AG04449 (cell line): ENCODE measurements at regions of chr9 and their contacts with region 1.

Region 1: DNA sequence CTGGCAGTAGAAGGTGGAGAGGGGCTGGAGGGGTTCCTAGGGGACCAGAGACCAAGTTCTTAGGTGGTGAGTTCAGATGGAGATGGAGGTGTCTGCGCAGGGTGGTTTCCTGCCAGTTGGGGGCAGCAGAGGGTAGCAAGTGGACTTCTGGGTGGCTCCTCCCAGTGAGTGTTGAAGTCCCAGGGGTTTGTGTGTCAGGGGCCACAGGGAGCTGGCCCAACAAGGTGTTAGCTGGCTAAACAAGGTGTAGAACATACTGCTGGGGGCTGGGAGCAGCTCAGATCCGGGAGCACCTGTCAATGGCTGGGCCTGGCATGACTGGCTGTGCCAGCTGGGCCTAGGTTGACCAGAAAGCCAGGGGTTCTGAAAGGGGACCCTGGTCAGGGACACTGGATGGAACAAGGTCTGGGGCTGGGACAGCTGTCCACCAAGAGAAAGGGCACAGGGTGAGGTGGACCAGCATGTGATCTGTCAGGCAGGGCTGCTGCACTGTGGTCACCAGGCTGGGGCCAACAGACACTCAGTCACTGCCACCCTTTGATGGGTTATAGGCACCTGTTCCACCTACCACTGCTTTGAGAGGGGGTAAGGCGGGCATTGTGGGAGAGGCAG is 35.6 kb downstream of the DAB2IP start:
- DNase-seq: no peak
- H3K4me3 ChIP-seq: no peak overlapping the region
- CTCF ChIP-seq: peak; percentile 91

Region 2: GRCh38 chr9:121331992-121332685 is 354.9 kb before region 1 on chr9:
- CTCF ChIA-PET with region 1: no interaction called
- POLR2A ChIA-PET with region 1: no interaction called
- DNase-seq: no peak
- H3K4me3 ChIP-seq: no peak overlapping the region
- CTCF ChIP-seq: peak; percentile 23

Region 3: GRCh38 chr9:121529237-121529987 is 157.6 kb before region 1 on chr9:
- CTCF ChIA-PET with region 1: no interaction called
- POLR2A ChIA-PET with region 1: no interaction called
- DNase-seq: peak; percentile 70
- H3K4me3 ChIP-seq: no peak overlapping the region
- CTCF ChIP-seq: no peak

Region 4: GRCh38 chr9:121557581-121558447 is 129.2 kb before region 1 on chr9:
- CTCF ChIA-PET with region 1: interaction called, 18 read pairs
- POLR2A ChIA-PET with region 1: interaction called, 3 read pairs
- DNase-seq: peak; percentile 76
- H3K4me3 ChIP-seq: peak overlapping the region; percentile 18
- CTCF ChIP-seq: no peak

Region 5: DNA sequence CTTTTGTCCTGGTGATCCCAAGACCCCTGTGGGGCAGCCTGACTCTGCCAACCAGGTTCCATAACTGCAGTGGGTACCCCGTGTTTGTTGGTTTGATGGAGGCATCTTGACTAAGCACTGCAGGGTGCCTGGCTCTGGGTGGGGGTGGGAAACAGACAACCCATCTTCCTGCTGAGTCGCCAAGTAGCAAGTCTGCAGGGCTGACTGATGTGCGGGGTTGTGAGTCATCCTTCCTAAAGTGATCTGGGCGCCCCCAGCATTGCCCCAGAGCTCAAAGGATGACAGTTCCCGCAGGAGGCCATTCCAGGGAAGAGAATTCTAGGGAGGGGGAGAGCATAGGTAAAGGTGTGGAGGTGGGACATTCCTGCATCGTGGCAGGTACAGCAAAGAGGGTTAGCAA is 12.1 kb before region 1 on chr9:
- CTCF ChIA-PET with region 1: interaction called, 110 read pairs
- POLR2A ChIA-PET with region 1: interaction called, 4 read pairs
- DNase-seq: no peak
- H3K4me3 ChIP-seq: no peak overlapping the region
- CTCF ChIP-seq: no peak

Region 6: DNA sequence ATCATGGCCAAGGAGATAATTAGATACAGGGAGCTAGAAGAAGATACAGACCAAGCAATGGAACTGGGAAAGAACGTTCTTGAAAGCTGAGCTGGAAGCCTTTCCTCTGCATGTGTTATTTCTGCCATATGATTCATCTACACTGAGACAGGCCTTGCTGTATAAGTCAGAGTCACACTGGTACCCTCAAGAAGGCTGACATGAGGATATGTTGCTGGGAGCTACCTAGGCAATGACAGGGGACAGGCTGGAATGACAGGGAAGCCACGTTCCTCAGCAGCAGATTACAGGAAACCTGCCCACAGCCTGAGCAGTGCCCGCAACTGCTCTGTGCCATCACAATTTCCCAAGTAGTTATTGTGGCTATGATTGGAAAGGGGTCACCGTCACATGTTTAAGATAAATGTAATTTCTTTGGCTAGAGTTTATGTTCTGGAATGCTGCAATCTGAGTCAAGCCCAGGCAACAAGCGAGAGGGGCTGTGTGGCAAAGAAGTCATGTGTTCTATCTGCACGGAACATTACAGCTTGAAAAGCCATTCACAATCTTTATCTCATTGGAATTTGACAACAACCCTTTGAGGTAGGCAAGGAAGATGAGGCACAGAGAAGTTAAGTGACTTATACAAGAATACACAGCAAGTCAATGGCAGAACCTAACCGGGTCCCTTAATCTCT is 297.8 kb after region 1 on chr9:
- CTCF ChIA-PET with region 1: interaction called, 42 read pairs
- POLR2A ChIA-PET with region 1: no interaction called
- DNase-seq: peak; percentile 77
- H3K4me3 ChIP-seq: no peak overlapping the region
- CTCF ChIP-seq: no peak

Region 7: DNA sequence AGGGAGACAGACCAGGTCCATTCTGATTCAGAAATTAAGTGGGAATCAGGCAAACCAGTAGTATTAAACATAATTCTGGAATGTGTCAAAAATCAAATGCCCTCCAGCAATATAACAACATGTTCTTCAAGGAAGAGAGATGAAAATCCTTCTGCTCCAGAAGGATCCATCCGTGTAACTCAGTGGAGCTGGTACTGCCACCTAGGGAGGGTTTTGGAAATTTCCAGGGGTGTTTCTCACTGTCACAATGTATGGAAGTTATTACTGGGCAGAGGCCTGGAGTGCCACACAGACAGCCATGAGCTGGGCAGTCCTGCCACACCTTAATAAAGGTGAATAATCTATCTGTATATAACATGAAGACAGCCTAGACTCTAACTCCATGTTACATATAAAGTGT is 318.6 kb after region 1 on chr9:
- CTCF ChIA-PET with region 1: interaction called, 146 read pairs
- POLR2A ChIA-PET with region 1: interaction called, 3 read pairs
- DNase-seq: no peak
- H3K4me3 ChIP-seq: no peak overlapping the region
- CTCF ChIP-seq: peak; percentile 61